Activated T-helper 1 cell treated with anti-CD3 and anti-CD28 coated beads, Interleukin-12 subunit alpha, Interleukin-12 subunit beta, Interleukin-2, Interleukin-4 antibody, amounts not matched to agents 30 ng/mL and 10 ng/mL and 1 ng/mL, durations not matched to agents 14 hours and 24 hours and 36 hours (primary cell): ENCODE measurements at regions of chr20 and their contacts with region 1.

Region 1: GRCh38 chr20:14055127-14055742 is 59.9 kb downstream of the MACROD2 start:
- DNase-seq: no peak
- H3K4me3 Mint-ChIP-seq: no peak overlapping the region
- H3K27ac Mint-ChIP-seq: no peak overlapping the region
- H3K4me1 Mint-ChIP-seq: no peaks in the 10 kb centered on the region
- H3K27me3 Mint-ChIP-seq: no peaks in the 10 kb centered on the region

Region 2: GRCh38 chr20:13771853-13772453 is 283.3 kb before region 1 on chr20:
- intact Hi-C with region 1: no loop called
- DNase-seq: no peak
- H3K4me3 Mint-ChIP-seq: no peak overlapping the region
- H3K27ac Mint-ChIP-seq: no peak overlapping the region
- H3K4me1 Mint-ChIP-seq: peaks cover 11% of the 10 kb centered on the region
- H3K27me3 Mint-ChIP-seq: no peaks in the 10 kb centered on the region

Region 3: GRCh38 chr20:13819885-13820645 is 235.2 kb before region 1 on chr20:
- intact Hi-C with region 1: loop called (anchors 1 kb)
- DNase-seq: no peak
- H3K4me3 Mint-ChIP-seq: no peak overlapping the region
- H3K27ac Mint-ChIP-seq: no peak overlapping the region
- H3K4me1 Mint-ChIP-seq: peaks cover 23% of the 10 kb centered on the region
- H3K27me3 Mint-ChIP-seq: no peaks in the 10 kb centered on the region

Region 4: GRCh38 chr20:14775518-14776203 is 720.4 kb after region 1 on chr20:
- intact Hi-C with region 1: no loop called
- DNase-seq: no peak
- H3K4me3 Mint-ChIP-seq: no peak overlapping the region
- H3K27ac Mint-ChIP-seq: no peak overlapping the region
- H3K4me1 Mint-ChIP-seq: no peaks in the 10 kb centered on the region
- H3K27me3 Mint-ChIP-seq: no peaks in the 10 kb centered on the region